GM10248 (cell line): ENCODE measurements at regions of chr17 and their contacts with region 1.

Region 1: DNA sequence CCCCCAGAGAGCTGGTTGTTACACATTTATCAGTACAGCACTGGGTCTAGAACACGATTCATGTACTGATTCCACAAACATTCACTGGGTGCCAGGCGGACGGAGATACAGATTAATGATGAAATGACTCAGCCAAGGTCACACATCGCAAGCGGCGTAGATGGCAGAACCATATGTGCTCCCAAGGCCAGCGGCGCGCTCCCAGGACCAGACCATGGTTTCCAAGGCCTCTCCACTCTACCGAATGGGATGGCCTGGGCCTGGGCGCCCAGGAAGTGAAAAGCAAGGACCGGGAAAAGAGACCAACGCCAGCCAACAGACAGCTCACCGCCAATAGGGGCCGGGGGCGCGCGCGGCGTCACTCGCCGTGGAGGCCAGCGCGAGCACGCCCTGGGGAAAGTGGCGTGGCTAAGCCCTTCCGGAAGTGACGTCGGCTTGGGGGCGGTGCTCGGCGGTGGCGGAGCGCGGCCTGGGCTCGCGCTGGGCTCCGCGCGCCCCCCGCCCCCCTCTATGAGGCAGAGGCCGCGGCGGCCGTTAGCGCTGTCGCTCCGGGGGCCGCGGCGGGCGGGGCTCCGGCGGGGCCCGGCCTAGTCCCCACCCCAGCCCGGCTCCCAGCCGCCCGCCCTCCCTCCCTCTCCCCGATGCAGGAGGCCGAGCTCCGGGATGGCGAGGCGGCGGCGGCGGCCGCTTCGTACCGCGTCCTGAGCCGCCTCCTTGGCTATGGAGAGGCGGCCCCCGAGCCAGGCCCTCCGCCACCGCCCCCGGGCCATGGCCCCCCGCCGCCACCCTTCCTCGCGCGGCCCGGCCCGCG is at the start of gene SOCS7:
- DNase-seq: peak; percentile 95
- CTCF ChIP-seq: no peak

Region 2: GRCh38 chr17:38333635-38334295 is 17.9 kb before region 1 on chr17:
- CTCF ChIA-PET with region 1: interaction called, 99 read pairs
- POLR2A ChIA-PET with region 1: interaction called, 4 read pairs
- DNase-seq: peak; percentile 68
- CTCF ChIP-seq: peak; percentile 71

Region 3: GRCh38 chr17:38379438-38379837 is 27.8 kb after region 1 on chr17:
- CTCF ChIA-PET with region 1: interaction called, 13 read pairs
- POLR2A ChIA-PET with region 1: no interaction called
- DNase-seq: no peak
- CTCF ChIP-seq: no peak

Region 4: DNA sequence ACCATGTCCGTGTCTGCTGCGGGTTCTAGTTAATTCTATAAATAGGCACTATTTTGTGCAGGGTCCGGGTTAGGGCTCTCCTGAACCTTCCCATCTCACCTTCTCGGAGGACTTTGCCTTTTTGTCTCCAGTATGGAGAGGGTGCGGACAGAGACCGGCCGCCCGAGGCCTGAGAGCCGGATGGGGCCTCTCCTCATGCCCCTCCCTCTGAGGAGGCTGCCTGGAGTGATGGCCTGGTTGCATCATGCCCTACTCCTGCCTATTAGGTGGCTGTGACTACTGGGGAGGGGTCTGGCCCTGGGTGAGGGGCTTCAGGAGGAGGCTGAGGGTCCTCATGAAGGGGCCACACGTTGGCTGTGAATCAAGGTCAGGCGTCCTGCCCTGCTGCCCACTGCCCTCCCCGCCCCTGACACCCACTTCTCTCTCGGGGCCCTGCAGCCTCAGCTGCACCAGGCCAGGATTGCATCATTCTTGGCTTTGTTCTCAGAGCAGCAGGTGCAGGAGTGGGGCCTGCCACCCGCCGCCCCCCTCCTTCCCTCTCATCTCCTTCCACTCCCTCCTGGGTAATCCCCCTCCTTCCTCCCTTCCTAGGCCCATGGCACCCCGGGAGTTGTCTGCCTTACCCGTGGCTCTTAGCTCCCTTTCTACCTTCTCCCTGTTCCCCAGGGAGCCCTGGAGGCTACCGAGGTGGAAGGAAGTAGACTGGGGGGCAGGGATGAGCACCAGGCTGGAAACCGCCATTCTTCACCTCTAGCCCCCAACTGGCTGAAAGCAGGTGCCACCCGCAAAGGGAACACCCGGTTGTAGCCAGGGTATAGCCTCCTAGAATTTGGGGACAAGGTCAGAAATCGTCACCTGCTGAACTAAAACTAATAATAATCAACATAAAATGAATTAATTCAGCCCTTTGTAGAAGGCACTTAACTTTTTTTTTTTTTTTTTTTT is 63.9 kb after region 1 on chr17:
- CTCF ChIA-PET with region 1: interaction called, 282 read pairs
- POLR2A ChIA-PET with region 1: interaction called, 3 read pairs
- DNase-seq: peak; percentile 63
- CTCF ChIP-seq: no peak

Region 5: DNA sequence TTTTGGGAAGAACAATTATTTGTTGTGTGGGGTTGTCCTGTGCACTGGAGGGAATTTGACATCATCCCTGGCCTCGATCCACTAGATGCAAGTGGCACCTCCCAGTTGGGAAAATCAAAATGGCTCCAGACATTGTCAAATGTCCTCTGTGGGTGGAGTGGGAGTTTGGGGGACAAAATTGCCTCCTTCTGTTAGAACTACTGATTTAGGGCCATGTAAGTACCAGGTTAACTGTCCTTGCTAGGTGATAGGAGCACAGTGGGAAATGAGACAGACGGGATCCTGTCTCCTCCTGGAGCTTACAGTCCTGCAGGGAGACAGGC is 133.5 kb after region 1 on chr17:
- CTCF ChIA-PET with region 1: interaction called, 13 read pairs
- POLR2A ChIA-PET with region 1: no interaction called
- DNase-seq: no peak
- CTCF ChIP-seq: no peak